ENCODE measurements at regions of chr1 and their contacts with region 1.

Region 1: DNA sequence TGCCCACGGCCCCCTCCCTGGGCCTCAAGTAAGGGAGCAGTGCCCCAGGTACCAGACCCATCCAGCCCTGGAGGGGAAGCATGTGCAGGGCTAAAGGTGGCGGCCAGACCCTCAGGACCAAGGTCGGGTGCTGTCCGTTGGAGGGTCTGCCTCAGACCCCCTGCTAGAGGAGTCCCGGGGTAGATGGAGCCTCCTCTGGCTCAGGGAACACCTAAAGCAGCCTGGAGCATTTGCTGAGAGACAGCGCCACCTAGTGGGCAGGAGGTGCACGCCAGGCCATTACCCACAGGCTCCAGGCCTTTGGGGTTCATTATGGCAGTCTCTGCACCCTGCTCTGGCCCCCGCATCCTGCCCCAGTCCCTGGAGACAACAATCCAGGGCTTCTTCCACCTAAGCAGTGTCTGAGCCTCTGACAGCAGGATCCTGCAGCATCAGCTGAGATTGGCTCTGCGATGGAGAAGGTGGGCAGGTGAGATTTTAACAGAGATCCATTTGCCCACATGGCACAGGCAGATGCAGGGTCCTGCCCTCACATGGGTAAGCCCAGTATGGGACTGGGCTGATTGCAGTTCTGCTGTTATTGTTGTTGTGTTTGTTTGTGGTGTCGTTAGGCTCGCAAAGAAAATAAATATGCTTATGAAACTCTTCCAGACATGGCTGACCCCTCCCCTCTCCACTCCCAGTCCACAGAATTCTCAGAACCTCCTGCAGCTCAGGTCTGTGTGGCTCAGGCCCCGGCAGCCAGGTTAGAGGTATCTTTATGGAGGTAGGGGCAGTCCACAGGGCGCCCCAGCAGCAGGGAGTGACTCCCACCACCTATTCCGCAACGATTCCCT is 42.4 kb downstream of the CTNNBIP1 start:
- DNase-seq: peak; percentile 62
- H3K4me3 ChIP-seq: no peak overlapping the region
- H3K27ac ChIP-seq: no peak overlapping the region
- H3K4me1 ChIP-seq: peaks cover 15% of the 10 kb centered on the region
- H3K27me3 ChIP-seq: no peaks in the 10 kb centered on the region
- CTCF ChIP-seq: peak; percentile 96 to 97
- POLR2A ChIP-seq: no peak

Region 2: DNA sequence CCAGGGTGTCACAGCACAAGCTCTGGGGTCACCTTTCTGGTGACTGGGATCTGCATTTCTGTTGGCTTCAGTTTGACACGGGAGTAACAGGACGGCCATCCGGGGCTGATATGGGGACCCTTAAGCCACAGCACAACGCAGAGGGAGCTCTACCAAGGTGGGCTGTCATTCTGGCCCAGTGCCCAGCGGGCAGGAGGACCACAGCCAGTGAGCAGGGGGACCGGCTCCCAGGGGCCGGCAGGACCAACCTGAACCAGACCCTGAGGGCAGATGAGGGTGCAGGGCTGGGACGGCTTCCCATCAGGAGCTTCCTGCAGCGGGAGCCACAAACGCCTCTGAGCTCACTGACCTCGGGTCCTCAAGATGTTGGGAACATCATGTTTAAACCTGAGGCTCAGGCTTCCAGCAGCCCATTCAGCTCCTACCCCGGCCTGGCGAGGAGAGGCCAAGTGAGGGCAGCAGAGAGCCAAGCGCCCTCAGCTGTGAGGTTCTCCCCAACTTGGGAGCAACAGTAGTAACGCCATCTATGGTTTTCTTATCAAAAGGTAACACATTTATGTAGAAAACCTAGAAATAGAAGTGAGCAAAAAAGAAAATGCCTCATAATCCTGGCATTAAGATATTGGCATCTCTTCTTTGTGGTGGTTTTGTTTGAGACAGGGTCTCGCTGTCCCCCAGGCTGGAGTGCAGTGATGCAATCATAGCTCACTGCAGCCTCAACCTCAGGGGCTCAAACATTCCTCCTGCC is 252.1 kb before region 1 on chr1:
- CTCF ChIA-PET with region 1: interaction called, 12 read pairs
- POLR2A ChIA-PET with region 1: no interaction called
- dilution Hi-C with region 1: no loop called
- intact Hi-C with region 1: no loop called
- DNase-seq: peak; percentile 36
- H3K4me3 ChIP-seq: no peak overlapping the region
- H3K27ac ChIP-seq: no peak overlapping the region
- H3K4me1 ChIP-seq: no peaks in the 10 kb centered on the region
- H3K27me3 ChIP-seq: no peaks in the 10 kb centered on the region
- CTCF ChIP-seq: peak; percentile 58 to 80
- POLR2A ChIP-seq: no peak

Region 3: GRCh38 chr1:9724706-9725476 is 142.7 kb before region 1 on chr1:
- CTCF ChIA-PET with region 1: interaction called, 35 read pairs
- POLR2A ChIA-PET with region 1: no interaction called
- dilution Hi-C with region 1: no loop called
- intact Hi-C with region 1: loop called (anchors 1 kb)
- DNase-seq: peak; percentile 41
- H3K4me3 ChIP-seq: no peak overlapping the region
- H3K27ac ChIP-seq: no peak overlapping the region
- H3K4me1 ChIP-seq: no peaks in the 10 kb centered on the region
- H3K27me3 ChIP-seq: no peaks in the 10 kb centered on the region
- CTCF ChIP-seq: peak; percentile 75 to 92
- POLR2A ChIP-seq: no peak

Region 4: DNA sequence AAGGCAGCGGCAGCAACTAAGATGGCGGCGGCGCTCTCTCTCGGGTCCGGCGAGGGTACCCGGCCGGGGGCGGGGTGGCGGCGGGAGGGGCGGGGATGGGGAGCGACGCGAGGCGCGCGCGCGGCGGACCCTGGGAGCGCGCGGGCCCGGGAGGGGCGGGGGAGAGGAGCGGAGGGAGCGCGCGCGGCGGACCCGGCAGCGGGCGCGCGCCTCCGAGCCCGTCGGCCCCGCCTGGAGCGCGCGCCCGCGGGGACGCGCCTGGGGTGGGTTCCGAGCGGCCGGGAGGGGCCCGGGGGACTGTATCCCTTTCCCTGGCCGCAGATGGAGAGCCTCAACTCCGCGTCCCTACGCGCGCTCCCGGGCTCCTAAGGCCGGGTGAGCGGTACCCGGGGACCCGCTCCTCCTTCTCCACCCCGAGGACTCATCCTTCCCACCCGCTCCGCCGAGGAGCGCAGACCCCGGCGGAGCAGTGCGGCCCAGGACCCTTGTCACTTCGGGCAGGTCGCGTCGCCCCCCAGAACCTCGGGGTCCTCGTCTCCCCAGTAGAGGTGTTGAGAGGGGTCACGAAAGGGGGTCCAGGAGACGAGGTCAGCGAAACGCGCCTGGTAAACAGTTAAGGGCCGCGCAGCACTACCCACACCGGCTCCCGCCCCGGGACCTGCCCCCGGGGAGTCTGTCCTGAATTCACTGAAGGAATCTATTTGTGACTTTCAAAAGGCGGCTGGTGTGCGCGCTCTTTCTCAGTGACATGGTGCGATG is 43.5 kb before region 1 on chr1 and contains the start of gene CLSTN1:
- CTCF ChIA-PET with region 1: interaction called, 5 read pairs
- POLR2A ChIA-PET with region 1: no interaction called
- dilution Hi-C with region 1: no loop called
- intact Hi-C with region 1: loop called (anchors 2 kb)
- DNase-seq: peak; percentile 80
- H3K4me3 ChIP-seq: peak within 1 kb of the TSS; percentile 26 to 98 (median 77)
- H3K27ac ChIP-seq: no peak within 1 kb of the TSS
- H3K4me1 ChIP-seq: peaks cover 18% of the 10 kb centered on the region
- H3K27me3 ChIP-seq: no peaks in the 10 kb centered on the region
- CTCF ChIP-seq: no peak
- POLR2A ChIP-seq: no peak
- total RNA-seq, gene CLSTN1: 130 and 132 TPM in 2 replicates

Region 5: DNA sequence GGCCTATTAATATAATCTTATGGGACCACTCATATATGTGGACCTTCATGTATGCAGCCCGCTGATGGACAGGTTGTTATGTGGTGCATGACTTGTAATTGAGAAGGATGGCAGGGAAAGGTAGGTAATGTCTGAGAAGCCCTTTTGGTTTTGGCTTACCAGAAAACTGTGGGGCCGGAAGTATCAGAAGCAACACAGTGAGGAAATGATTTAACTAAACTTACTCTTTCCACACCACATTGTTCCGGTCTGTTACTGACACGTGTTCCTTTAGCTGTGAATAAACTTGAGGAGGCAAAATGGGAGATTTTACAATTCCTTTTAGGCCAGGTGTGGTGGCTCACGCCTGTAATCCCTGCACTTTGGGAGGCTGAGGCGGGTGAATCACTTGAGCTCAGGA is 375.2 kb after region 1 on chr1:
- CTCF ChIA-PET with region 1: no interaction called
- POLR2A ChIA-PET with region 1: no interaction called
- dilution Hi-C with region 1: no loop called
- intact Hi-C with region 1: no loop called
- DNase-seq: no peak
- H3K4me3 ChIP-seq: no peak overlapping the region
- H3K27ac ChIP-seq: no peak overlapping the region
- H3K4me1 ChIP-seq: no peaks in the 10 kb centered on the region
- H3K27me3 ChIP-seq: no peaks in the 10 kb centered on the region
- CTCF ChIP-seq: no peak
- POLR2A ChIP-seq: no peak